CD4-positive, alpha-beta T cell (primary cell): ENCODE measurements at regions of chr7 and their contacts with region 1.

Region 1: GRCh38 chr7:142060936-142061335 is 50.6 kb upstream of the MGAM2 start:
- DNase-seq: no peak
- ATAC-seq: no peak
- H3K4me3 ChIP-seq: no peak overlapping the region
- H3K4me3 Mint-ChIP-seq: no peak overlapping the region
- H3K27ac ChIP-seq: no peak overlapping the region
- H3K27ac Mint-ChIP-seq: no peak overlapping the region
- H3K4me1 ChIP-seq: no peaks in the 10 kb centered on the region
- H3K4me1 Mint-ChIP-seq: no peaks in the 10 kb centered on the region
- H3K27me3 ChIP-seq: no peaks in the 10 kb centered on the region
- H3K27me3 Mint-ChIP-seq: peaks cover 7% of the 10 kb centered on the region
- CTCF ChIP-seq: no peak

Region 2: GRCh38 chr7:142088022-142088714 is 27.2 kb after region 1 on chr7:
- CTCF ChIA-PET with region 1: no interaction called
- POLR2A ChIA-PET with region 1: no interaction called
- intact Hi-C with region 1: loop called in 1 of 2 experiments (anchors 1 kb)
- DNase-seq: no peak
- ATAC-seq: no peak
- H3K4me3 ChIP-seq: no peak overlapping the region
- H3K4me3 Mint-ChIP-seq: no peak overlapping the region
- H3K27ac ChIP-seq: no peak overlapping the region
- H3K27ac Mint-ChIP-seq: no peak overlapping the region
- H3K4me1 ChIP-seq: no peaks in the 10 kb centered on the region
- H3K4me1 Mint-ChIP-seq: no peaks in the 10 kb centered on the region
- H3K27me3 ChIP-seq: no peaks in the 10 kb centered on the region
- H3K27me3 Mint-ChIP-seq: peaks cover 5% of the 10 kb centered on the region
- CTCF ChIP-seq: no peak